ENCODE measurements at regions of chr9 and their contacts with region 1.

Region 1: DNA sequence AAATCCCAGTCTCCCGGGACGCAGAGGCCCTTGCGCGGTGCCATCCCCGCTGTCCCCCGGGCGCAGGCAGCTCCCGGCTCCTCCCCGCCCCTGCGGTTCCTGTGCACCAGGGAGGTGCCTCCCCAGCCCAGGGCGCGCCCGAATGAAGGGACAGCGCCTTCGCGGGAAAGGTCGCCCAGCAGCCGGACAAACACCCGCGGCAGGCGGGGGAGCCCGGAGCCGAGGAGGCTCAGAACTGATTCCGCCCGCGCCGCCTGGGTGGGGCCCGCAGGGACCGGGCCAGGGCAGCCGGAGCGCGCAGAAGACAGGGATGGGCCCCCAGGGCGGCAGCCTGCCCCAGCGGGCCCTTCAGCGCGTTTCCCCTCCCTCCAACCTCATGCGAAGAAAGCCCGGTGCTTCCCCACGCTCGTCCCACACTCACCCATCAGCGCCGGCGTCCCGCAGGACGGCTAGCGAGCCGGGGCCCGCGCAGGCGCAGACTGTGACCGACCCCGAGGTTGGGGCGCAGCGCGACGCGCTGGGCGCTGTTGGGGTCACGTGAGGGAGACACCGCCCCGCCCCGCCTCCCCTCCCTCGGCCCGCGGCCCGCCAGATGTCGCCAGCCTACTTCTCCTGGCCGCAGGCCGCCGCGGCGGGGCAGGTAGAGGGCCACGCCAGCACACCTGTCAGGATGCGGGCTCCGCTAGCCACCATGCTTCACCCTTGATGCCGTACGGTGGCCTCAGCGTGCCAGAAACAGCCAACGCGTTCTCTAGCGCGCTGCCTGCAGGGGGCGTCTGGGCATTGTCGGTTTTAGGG is at the start of gene SLC25A51:
- DNase-seq: peak; percentile 94
- H3K4me3 ChIP-seq: peak within 1 kb of the TSS; percentile 29 to 90 (median 74)
- H3K27ac ChIP-seq: peak within 1 kb of the TSS; percentile 5
- H3K4me1 ChIP-seq: peaks cover 21% of the 10 kb centered on the region
- H3K27me3 ChIP-seq: no peaks in the 10 kb centered on the region
- CTCF ChIP-seq: peak; percentile 98 to 100
- POLR2A ChIP-seq: peak; percentile 80
- total RNA-seq, gene SLC25A51: 36.2 and 38.3 TPM in 2 replicates

Region 2: DNA sequence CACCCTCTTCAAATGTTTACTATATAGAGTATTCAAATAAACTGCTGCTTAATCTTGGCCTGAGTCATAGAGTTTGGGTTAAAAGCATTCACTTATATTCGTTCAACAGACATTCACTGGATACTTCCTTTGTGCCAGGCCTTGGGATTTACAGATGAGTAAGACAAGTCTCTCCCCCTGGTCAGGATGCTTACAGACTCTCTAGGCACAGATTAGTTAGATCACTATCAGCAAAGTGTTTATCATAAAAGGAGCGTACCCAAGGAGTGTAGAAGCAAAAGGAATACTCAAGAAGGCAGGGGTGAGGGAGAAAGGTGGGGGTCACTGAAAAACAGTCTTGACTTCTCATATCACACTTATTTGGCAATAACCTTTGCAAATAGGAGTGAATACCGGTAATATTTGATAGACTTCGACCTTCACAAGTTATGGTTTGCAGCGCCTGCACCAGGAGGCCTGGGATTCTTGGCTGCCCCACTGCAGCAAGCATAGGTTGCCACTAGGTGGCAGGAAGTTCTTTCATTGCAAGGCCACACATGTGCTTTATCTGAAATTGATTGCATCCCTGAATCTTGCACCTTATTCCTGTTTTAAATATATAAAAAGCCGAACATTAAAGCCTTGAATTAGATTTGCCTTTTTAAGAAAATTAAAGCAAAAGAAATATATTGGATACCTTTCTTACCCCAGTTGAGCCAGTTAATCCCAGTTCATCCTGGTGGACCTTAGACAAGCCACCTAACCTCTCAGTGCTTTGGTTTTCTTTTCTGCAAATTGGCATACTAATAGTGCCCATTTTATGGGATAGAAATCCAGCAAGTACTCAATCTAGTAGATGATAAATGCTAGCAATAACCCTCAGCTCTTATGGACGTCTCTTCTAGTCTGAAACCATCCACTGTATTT is 156.7 kb before region 1 on chr9:
- CTCF ChIA-PET with region 1: no interaction called
- POLR2A ChIA-PET with region 1: no interaction called
- dilution Hi-C with region 1: no loop called
- intact Hi-C with region 1: loop called (anchors 5 kb)
- DNase-seq: peak; percentile 64
- H3K4me3 ChIP-seq: no peak overlapping the region
- H3K27ac ChIP-seq: no peak overlapping the region
- H3K4me1 ChIP-seq: no peaks in the 10 kb centered on the region
- H3K27me3 ChIP-seq: peaks cover 0 to 6% of the 10 kb centered on the region in 2 experiments
- CTCF ChIP-seq: peak; percentile 84 to 91
- POLR2A ChIP-seq: no peak

Region 3: DNA sequence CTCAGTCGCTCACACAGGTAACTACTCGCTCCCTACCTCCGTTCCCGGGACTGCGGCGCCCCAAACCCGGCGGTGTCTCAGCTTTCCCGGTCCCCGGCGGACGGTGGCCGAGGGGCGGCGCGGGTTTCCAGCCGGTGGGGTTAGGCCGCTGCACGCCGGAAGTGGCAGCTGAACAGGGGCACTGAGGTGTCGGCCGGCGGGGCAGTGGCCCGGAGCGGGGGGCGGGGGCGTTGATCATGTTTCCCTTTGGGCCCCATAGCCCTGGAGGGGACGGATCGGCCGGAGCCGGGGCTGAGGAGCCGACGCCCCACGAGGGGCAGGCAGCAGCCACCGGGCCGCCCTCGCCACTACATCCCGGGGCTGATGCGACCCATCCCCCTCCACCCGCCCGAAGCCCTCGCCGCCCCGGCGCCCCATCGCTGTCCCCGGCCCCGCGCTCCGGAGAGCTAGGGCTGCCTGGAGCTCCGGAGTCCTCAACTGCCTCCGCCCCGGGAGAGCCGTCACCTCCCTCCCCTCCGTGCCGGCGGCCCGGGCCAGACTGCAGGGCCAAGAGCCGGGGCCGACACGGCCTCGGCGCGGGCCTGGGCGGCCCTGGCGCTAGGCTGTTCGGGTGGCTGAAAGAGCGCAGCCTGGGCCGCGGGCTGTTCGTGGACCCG is 103.1 kb before region 1 on chr9 and contains the start of gene DCAF10:
- CTCF ChIA-PET with region 1: no interaction called
- POLR2A ChIA-PET with region 1: no interaction called
- dilution Hi-C with region 1: no loop called
- intact Hi-C with region 1: loop called (anchors 2 kb)
- DNase-seq: peak; percentile 86
- H3K4me3 ChIP-seq: peak within 1 kb of the TSS; percentile 23 to 64 (median 63)
- H3K27ac ChIP-seq: peak within 1 kb of the TSS; percentile 9
- H3K4me1 ChIP-seq: peaks cover 14% of the 10 kb centered on the region
- H3K27me3 ChIP-seq: no peaks in the 10 kb centered on the region
- CTCF ChIP-seq: no peak
- POLR2A ChIP-seq: peak; percentile 81
- total RNA-seq, gene DCAF10: 20.0 and 21.5 TPM in 2 replicates

Region 4: GRCh38 chr9:37812773-37813379 is 91.0 kb before region 1 on chr9:
- CTCF ChIA-PET with region 1: no interaction called
- POLR2A ChIA-PET with region 1: no interaction called
- dilution Hi-C with region 1: no loop called
- intact Hi-C with region 1: no loop called
- DNase-seq: no peak
- H3K4me3 ChIP-seq: no peak overlapping the region
- H3K27ac ChIP-seq: no peak overlapping the region
- H3K4me1 ChIP-seq: no peaks in the 10 kb centered on the region
- H3K27me3 ChIP-seq: no peaks in the 10 kb centered on the region
- CTCF ChIP-seq: no peak
- POLR2A ChIP-seq: no peak

Region 5: DNA sequence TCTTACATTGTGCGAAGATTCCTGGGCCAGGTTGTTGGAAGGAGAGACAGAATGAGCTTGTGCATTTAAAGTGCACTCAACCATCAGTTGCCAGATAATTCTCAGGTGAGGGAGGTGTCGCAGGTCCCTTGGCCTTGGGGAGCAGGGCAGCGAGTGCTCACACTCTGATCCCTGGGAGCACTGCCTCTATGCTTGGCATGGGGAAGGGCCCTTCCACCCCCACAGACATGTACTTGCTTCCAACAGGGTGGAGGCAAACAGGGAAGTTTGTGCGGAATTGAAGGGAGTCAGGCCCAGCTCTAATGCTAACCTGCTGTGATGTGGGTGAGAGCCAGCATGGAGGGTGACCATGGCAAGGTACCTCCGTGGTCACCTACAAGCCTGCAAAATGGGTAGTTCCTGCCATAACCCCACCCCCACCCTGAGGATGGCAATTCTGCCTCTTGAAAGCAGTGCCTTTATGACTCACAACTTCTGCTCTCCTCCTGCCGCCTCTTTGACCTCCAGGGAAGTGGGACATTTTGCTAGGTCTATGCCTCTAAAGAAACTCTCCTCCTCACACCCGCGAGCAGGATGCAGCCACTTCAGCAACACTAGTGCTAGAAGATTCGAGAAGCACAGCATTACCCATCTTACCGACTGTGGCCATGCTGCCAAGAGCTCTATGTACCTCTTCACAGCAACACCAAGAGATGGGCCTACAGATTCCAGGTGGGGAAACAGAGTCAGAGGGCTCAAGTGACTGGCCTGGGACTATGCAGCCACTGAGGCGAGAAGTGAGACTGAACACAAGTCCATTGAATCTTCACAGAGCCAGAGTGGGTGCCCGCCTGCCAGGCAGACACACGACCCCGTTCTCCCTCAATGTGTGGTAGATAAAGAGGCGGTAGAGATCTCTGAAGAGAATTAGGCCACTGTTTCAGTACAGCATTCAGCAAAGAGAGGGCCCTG is 22.2 kb after region 1 on chr9:
- CTCF ChIA-PET with region 1: no interaction called
- POLR2A ChIA-PET with region 1: no interaction called
- dilution Hi-C with region 1: no loop called
- intact Hi-C with region 1: no loop called
- DNase-seq: peak; percentile 32
- H3K4me3 ChIP-seq: no peak overlapping the region
- H3K27ac ChIP-seq: no peak overlapping the region
- H3K4me1 ChIP-seq: peaks cover 39% of the 10 kb centered on the region
- H3K27me3 ChIP-seq: no peaks in the 10 kb centered on the region
- CTCF ChIP-seq: no peak
- POLR2A ChIP-seq: no peak

Region 6: DNA sequence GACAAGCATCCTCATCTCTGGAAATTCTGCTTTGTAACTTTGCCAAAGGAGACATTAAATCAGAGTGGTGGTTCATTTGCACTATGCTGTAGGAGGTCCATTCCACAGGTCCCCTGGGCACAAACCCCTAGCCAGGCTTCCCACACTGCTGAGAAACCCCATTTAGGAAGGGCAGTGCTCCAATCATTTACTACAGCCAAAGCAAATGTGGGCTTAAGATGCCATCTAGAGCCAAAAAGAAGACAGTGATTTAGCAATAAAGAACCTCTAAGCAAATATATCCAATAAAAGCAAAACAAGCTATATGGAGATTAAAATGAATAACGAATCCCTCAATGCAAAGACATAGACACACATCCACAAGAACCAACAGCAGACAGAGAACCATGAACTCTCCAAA is 359.7 kb after region 1 on chr9:
- CTCF ChIA-PET with region 1: interaction called, 8 read pairs
- POLR2A ChIA-PET with region 1: no interaction called
- dilution Hi-C with region 1: no loop called
- intact Hi-C with region 1: loop called (anchors 2 kb)
- DNase-seq: peak; percentile 53
- H3K4me3 ChIP-seq: no peak overlapping the region
- H3K27ac ChIP-seq: no peak overlapping the region
- H3K4me1 ChIP-seq: no peaks in the 10 kb centered on the region
- H3K27me3 ChIP-seq: peaks cover 6 to 13% of the 10 kb centered on the region in 2 experiments
- CTCF ChIP-seq: peak in 1 of 2 donors; percentile 35
- POLR2A ChIP-seq: no peak

Region 7: DNA sequence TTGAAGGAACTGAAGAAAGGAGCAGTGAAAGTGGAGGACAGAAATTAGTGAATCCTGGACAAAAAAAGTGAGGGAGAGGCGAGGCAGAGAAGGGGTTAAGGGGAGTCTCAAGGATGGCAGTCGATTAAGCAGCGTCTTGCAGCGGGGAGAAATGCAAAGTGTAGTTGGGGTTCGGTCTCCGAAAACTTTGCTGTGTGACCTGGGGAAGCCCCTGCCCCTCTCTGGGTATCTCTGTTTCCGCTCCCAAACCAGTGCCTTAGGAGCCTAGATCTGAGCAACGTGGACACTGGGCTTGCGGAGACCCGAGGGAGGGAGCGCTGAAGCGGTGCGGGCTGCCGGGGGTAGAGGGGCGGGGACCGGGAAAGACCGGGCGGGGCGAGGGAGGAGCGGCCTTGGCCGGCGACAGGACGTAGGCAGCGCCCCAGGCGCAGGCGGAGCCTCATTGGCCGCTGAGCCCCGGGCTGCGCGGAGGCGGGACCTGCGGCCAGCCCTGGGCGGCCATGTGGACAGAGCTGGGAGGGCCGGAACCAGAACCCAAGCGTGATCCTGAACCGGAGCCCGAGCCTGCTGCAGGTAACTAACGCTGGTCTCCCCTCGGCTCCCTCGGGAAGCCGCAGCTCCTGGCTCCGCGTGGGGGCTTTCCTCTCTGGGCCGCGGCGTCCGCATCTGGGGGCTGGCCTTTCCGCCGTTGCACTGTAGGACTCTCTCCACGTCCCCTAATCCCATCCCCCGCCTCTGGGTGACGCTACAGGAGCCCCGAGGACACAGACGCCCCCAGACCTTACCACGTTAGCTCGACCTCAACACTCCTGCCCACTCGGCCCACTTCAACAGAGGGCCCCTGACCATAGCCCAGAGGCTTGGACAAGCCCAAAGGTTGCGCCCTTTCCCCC is 488.6 kb after region 1 on chr9 and contains the start of gene ALDH1B1:
- CTCF ChIA-PET with region 1: interaction called, 3 read pairs
- POLR2A ChIA-PET with region 1: interaction called, 3 read pairs
- dilution Hi-C with region 1: no loop called
- intact Hi-C with region 1: loop called (anchors 2 kb)
- DNase-seq: peak; percentile 89
- H3K4me3 ChIP-seq: peak within 1 kb of the TSS; percentile 42 to 89 (median 82)
- H3K27ac ChIP-seq: peak within 1 kb of the TSS; percentile 43
- H3K4me1 ChIP-seq: peaks cover 7% of the 10 kb centered on the region
- H3K27me3 ChIP-seq: no peaks in the 10 kb centered on the region
- CTCF ChIP-seq: peak in 1 of 2 donors; percentile 31
- POLR2A ChIP-seq: peak; percentile 79
- total RNA-seq, gene ALDH1B1: 20.5 and 21.7 TPM in 2 replicates